Activated CD4-positive, alpha-beta memory T cell treated with anti-CD3 and anti-CD28 coated beads for 36 hours (primary cell): ENCODE measurements at regions of chr1 and their contacts with region 1.

Region 1: DNA sequence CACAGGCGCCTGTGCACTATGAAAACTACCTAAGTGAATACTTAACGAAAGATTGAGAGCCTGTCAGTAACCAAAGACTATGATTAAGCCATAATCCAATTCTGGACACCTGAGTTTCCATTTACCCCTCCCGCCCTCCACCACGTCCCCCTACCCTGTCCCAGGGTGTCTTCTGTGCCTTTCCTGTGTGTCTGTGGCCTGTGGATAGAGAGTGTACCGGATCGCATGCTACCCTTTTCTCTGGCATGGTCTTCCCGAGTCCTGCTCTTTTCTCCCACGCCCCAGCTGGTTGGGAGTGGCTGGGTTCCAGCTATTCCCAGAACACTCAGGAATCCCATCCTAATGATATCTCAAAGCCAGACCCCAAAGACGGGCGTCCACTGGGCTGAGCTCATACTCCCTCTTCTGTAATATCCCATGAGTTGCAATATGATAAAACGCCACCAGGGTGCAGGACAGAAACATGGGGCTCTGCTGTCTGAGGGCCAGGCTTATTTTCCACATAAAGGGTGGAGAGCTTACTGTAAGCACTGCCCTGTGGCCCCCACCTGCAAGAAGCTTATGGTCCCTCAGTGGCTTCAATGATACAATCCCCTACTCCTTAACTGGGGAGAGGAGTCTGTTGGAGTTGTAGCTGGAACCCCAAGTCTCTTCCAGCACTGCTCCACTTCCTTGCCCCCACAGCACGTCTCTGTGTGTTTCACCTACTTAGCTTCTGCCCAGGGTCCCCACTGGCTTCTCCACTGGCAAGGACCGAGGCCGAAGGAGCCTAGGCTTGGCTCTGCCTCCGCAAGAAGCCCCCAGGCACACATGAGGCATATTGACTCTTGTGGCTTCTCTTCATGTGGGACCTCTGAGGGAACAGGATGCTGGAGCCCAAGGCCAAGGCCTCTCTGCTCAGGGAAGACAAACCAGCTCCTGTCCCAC is 17.6 kb upstream of the ALX3 start:
- DNase-seq: peak; percentile 52
- H3K4me3 Mint-ChIP-seq: no peak overlapping the region
- H3K27ac Mint-ChIP-seq: no peak overlapping the region
- H3K4me1 Mint-ChIP-seq: peaks cover 12% of the 10 kb centered on the region
- H3K27me3 Mint-ChIP-seq: peaks cover 44% of the 10 kb centered on the region

Region 2: DNA sequence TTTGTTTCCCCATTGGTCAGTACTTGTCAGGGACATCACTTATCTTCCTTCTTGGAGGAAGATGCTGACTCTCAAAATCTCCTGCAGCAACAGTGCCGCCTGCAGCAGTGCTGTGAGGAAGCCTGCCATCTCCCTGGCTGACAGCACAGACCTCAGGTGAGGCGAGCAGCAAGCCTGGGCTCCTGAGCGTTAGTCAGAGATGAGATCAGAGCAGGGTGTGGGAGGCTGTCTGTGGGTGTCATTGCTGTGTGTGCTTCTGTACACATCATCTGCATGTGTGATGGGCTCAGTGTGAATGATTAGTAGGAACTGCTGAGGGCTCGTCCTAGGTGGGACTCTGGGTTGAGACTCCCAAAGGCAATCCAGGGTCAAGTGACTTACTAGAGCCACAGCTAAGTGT is 47.5 kb before region 1 on chr1:
- CTCF ChIA-PET with region 1: interaction called, 10 read pairs
- POLR2A ChIA-PET with region 1: no interaction called
- intact Hi-C with region 1: loop called (anchors 2 kb)
- DNase-seq: peak; percentile 46
- H3K4me3 Mint-ChIP-seq: no peak overlapping the region
- H3K27ac Mint-ChIP-seq: no peak overlapping the region
- H3K4me1 Mint-ChIP-seq: peaks cover 19% of the 10 kb centered on the region
- H3K27me3 Mint-ChIP-seq: no peaks in the 10 kb centered on the region

Region 3: GRCh38 chr1:110060034-110060661 is 27.9 kb before region 1 on chr1:
- CTCF ChIA-PET with region 1: interaction called, 20 read pairs
- POLR2A ChIA-PET with region 1: no interaction called
- intact Hi-C with region 1: no loop called
- DNase-seq: peak; percentile 85
- H3K4me3 Mint-ChIP-seq: no peak overlapping the region
- H3K27ac Mint-ChIP-seq: no peak overlapping the region
- H3K4me1 Mint-ChIP-seq: no peaks in the 10 kb centered on the region
- H3K27me3 Mint-ChIP-seq: no peaks in the 10 kb centered on the region

Region 4: DNA sequence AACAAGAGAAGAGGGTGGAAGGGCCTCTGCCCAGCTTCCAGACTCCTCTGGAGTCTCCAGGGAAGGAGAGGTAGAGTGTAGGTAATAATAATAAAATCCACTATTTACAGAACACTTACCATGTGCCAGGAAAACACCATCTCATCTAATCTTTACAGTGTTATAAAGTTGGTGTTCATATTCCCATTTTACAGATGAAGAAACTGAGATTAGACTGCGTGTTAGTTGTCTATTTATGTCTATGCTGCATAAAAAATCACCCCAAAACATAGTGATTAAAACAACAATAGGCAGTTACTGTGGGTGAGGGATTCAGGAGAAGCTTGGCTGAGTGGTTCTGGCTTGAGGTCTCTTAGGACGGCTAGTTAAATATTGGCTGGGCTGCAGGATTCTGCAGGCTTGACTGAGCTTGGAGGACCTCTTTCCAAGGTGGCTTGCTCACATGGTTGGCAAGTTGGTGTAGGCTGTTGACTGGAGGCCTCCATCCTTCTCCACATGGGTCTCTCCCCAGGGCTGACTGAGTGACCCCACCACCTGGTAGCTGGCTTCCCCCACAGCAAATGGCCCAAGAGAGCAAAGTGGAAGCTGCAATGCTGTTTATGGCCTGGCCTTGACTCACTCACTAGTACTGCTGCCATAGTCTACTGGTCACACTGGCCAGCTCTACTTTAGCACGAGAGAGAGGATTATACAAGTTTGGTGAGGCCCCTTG is 11.1 kb before region 1 on chr1:
- CTCF ChIA-PET with region 1: interaction called, 11 read pairs
- POLR2A ChIA-PET with region 1: no interaction called
- intact Hi-C with region 1: no loop called
- DNase-seq: no peak
- H3K4me3 Mint-ChIP-seq: no peak overlapping the region
- H3K27ac Mint-ChIP-seq: no peak overlapping the region
- H3K4me1 Mint-ChIP-seq: no peaks in the 10 kb centered on the region
- H3K27me3 Mint-ChIP-seq: peaks cover 28% of the 10 kb centered on the region

Region 5: DNA sequence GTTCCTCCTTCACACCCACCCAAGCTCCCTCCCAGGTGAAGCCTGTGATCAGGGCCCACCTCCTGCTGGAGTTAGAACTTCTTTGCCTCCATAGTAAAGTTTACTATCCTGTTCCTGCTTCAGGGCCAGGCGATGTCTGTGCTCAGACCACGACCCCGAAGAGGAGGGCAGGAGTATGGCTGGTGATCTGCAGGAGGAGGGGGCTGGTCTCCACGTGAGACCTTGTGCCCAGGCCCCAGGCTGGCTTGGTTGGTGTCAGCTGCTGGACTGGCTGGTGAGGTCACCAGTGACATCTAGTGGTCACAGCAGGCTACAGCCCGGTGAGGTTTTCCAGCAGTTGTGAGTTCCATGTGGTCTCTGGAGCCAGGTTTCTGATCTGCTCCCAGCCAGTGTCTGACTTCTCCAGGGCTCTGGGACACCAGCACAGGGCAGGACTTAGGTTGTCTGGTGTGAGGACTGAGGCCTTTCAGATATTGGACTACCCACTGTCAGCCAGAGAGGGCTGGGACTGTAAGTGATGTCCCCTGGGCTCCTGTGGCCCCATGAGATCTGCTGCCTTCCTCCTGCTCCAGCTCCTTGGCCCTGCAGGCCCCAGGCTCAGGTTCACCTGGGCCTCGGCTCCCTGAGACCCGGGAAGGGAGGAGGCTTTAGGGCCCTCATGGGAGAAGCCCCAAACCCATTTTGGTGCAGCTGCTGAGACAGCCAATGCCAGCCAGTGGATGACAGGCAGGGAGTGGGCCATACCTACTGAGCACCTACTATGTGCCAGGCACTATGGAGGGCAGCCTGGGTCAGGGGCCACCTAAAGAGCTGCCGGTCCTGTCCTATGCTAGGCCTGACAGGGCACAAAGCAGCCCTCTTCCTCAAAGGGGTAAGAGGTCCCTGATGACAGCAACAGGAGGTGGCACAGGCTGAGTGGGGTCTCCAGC is 18.2 kb after region 1 on chr1:
- CTCF ChIA-PET with region 1: interaction called, 137 read pairs
- POLR2A ChIA-PET with region 1: interaction called, 3 read pairs
- intact Hi-C with region 1: loop called (anchors 1 kb)
- DNase-seq: peak; percentile 77
- H3K4me3 Mint-ChIP-seq: no peak overlapping the region
- H3K27ac Mint-ChIP-seq: no peak overlapping the region
- H3K4me1 Mint-ChIP-seq: no peaks in the 10 kb centered on the region
- H3K27me3 Mint-ChIP-seq: no peaks in the 10 kb centered on the region